ENCODE measurements at regions of chr17 and their contacts with region 1.

Region 1: DNA sequence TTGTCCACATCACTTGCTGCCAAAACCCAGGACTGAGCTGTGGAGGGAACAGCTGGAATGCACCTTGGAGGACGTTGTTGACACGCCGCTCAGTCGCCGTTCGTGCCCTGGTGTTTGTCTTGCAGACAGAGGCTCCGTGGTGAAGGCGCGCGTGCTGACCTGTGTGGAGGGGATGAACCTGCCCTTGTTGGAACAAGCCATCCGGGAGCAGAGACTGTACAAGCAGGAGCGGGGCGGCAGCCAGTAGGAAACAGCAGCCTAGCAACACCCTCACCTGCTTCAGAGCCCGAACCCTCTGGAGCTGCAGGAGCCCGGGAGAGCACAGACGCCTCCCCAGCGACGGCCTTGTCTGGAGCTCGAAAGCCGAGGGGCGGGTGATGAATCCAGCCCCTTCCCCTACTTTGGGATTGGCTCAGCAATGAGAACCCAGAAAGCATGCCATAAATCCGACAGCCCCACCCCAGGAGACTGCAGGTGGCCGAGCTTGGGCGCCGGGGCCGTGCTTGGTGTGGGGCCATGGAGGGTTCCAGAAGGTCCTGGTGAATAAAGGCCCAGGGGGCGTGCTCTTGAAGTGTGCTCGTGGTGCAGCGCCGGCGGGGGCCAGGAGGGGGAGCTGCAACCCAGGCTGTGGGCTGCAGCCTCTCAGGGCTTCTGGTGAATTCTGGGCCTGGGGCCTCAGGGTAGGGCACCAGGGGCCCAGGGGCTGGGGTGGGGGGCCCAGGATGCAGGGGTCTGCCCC is 470 bp upstream of the CDK3 start:
- DNase-seq: peak; percentile 83
- ATAC-seq: peak; percentile 93
- H3K4me3 Mint-ChIP-seq: no peak overlapping the region
- H3K27ac Mint-ChIP-seq: no peak overlapping the region
- H3K4me1 Mint-ChIP-seq: peaks cover 14% of the 10 kb centered on the region
- H3K27me3 Mint-ChIP-seq: no peaks in the 10 kb centered on the region
- CTCF ChIP-seq: peak; percentile 86

Region 2: GRCh38 chr17:75806886-75807500 is 193.2 kb before region 1 on chr17:
- CTCF ChIA-PET with region 1: no interaction called
- POLR2A ChIA-PET with region 1: no interaction called
- intact Hi-C with region 1: no loop called
- DNase-seq: no peak
- ATAC-seq: no peak
- H3K4me3 Mint-ChIP-seq: no peak overlapping the region
- H3K27ac Mint-ChIP-seq: no peak overlapping the region
- H3K4me1 Mint-ChIP-seq: peaks cover 18% of the 10 kb centered on the region
- H3K27me3 Mint-ChIP-seq: no peaks in the 10 kb centered on the region
- CTCF ChIP-seq: no peak

Region 3: GRCh38 chr17:75904749-75905521 is 95.2 kb before region 1 on chr17 and contains the start of gene MRPL38:
- CTCF ChIA-PET with region 1: interaction called, 165 read pairs
- POLR2A ChIA-PET with region 1: interaction called, 3 read pairs
- intact Hi-C with region 1: loop called (anchors 5 kb)
- DNase-seq: peak; percentile 96
- ATAC-seq: peak; percentile 98
- H3K4me3 Mint-ChIP-seq: peak within 1 kb of the TSS; percentile 87
- H3K27ac Mint-ChIP-seq: peak within 1 kb of the TSS; percentile 92
- H3K4me1 Mint-ChIP-seq: peaks cover 15% of the 10 kb centered on the region
- H3K27me3 Mint-ChIP-seq: no peaks in the 10 kb centered on the region
- CTCF ChIP-seq: peak; percentile 99
- total RNA-seq, gene MRPL38: 117 to 126 TPM

Region 4: DNA sequence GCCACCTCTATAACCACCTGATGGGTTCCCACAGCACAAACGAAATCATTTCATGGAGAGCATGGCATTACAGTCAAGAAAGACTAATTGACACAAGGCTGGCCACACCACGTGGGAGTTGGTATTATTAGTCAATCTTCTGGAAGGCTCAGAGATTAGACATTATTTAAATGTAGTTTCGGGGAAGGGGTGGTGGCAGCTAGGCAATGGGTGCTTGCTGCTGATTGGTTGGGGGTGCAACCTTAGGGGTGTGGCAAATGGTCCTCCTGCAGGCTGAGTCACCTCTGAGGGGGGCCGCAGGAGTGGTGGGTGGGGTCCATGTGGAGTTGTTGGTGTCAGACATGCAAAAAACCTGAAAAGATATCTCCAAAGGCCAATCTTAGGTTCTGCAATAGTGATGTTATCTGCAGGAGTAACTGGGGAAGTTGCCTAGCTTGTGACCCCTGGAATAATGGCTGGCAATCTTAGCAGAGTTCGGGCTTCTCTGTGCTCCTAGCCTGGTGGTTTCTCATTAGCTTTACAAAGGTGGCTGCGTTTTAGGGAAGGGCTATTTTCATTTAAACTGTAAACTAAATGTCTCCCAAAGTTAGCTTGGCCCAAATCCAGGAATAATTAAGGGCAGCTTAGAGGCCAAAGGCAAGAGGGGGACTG is 16.5 kb before region 1 on chr17:
- CTCF ChIA-PET with region 1: interaction called, 12 read pairs
- POLR2A ChIA-PET with region 1: interaction called, 3 read pairs
- intact Hi-C with region 1: no loop called
- DNase-seq: no peak
- ATAC-seq: no peak
- H3K4me3 Mint-ChIP-seq: no peak overlapping the region
- H3K27ac Mint-ChIP-seq: no peak overlapping the region
- H3K4me1 Mint-ChIP-seq: peaks cover 14% of the 10 kb centered on the region
- H3K27me3 Mint-ChIP-seq: no peaks in the 10 kb centered on the region
- CTCF ChIP-seq: no peak

Region 5: GRCh38 chr17:76027159-76027839 is 27.1 kb after region 1 on chr17 and contains the start of gene EVPL:
- CTCF ChIA-PET with region 1: interaction called, 10 read pairs
- POLR2A ChIA-PET with region 1: no interaction called
- intact Hi-C with region 1: no loop called
- DNase-seq: no peak
- ATAC-seq: no peak
- H3K4me3 Mint-ChIP-seq: no peak within 1 kb of the TSS
- H3K27ac Mint-ChIP-seq: no peak within 1 kb of the TSS
- H3K4me1 Mint-ChIP-seq: peaks cover 21% of the 10 kb centered on the region
- H3K27me3 Mint-ChIP-seq: no peaks in the 10 kb centered on the region
- CTCF ChIP-seq: no peak
- total RNA-seq, gene EVPL: 0.16 to 0.34 TPM

Measured in activated CD8-positive, alpha-beta T cell treated with anti-CD3 and anti-CD28 coated beads for 36 hours (primary cell).